ENCODE measurements at regions of chr17 and their contacts with region 1.

Region 1: DNA sequence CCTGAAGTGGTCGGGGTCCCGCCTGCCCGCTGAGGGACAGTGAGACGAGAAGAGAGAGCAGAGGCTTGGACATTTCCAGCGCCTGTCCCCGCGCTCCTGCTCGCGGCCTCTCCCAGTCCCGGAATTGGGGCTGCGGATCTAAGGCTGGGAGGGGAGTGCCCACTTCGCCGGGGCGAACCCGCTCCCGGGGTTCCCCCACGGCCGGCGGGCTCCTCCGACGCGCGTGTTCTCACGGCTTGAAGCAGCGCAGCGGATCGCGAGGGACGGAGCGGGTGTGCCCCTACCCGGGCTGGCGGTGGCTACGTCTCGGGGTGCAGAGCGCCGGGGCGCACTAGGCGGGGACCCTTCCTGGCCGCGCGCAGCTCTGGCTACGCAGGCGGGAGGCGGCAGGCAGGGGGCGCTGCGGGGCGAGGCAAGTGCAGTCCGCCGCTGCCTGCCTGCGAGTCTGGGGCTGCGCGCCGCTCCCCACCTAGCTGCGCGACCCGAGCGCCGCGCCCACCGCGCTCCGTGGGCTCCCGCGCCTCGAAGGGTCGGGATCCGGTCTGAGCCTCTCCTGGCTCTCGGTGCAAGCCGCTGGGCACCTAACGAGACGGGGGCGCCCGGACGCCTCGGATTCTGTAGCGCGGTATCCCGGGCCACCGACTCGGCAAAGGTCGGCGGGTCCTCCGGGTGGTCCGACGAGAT is 1.2 kb downstream of the NGFR start:
- DNase-seq: peak; percentile 42 to 94
- H3K4me3 ChIP-seq: peak overlapping the region; percentile 6
- CTCF ChIP-seq: no peak
- POLR2A ChIP-seq: no peak

Region 2: GRCh38 chr17:48107168-48108132 is 1388.9 kb before region 1 on chr17 and contains the start of gene SNX11:
- intact Hi-C with region 1: loop called (anchors 5 kb)
- DNase-seq: peak; percentile 84 to 98
- H3K4me3 ChIP-seq: peak within 1 kb of the TSS; percentile 59
- CTCF ChIP-seq: no peak
- POLR2A ChIP-seq: no peak
- total RNA-seq, gene SNX11: 11.1 to 15.7 (median 13.0) TPM

Region 3: GRCh38 chr17:49434821-49435670 is 61.3 kb before region 1 on chr17:
- intact Hi-C with region 1: loop called (anchors 10 kb)
- DNase-seq: peak in 1 of 2 donors; percentile 84
- H3K4me3 ChIP-seq: no peak overlapping the region
- CTCF ChIP-seq: no peak
- POLR2A ChIP-seq: no peak

Region 4: DNA sequence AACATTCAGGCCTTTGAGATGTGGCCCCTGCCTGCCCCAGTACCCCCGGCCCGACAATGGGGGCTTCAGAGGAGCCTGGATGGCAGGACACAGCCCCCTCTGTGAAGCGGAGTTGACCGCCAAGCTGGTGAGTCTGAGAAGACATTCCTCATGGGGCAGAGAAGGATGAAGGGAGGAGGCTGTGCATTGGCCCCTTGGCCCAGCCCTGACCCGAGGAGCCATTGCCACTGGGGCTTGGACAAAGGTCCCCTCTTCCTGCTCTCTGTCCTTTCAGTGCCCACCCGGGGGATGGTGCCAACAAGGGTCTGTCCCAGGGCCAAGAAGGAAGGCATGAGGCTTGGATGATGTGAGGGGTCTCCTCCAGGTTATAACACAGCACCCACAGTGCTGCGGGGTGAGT is 50.7 kb before region 1 on chr17:
- intact Hi-C with region 1: no loop called
- DNase-seq: no peak
- H3K4me3 ChIP-seq: no peak overlapping the region
- CTCF ChIP-seq: no peak
- POLR2A ChIP-seq: no peak

Region 5: GRCh38 chr17:49548506-49549310 is 52.4 kb after region 1 on chr17:
- intact Hi-C with region 1: loop called (anchors 5 kb)
- DNase-seq: peak in 1 of 2 donors; percentile 83
- H3K4me3 ChIP-seq: no peak overlapping the region
- CTCF ChIP-seq: no peak
- POLR2A ChIP-seq: no peak

Region 6: DNA sequence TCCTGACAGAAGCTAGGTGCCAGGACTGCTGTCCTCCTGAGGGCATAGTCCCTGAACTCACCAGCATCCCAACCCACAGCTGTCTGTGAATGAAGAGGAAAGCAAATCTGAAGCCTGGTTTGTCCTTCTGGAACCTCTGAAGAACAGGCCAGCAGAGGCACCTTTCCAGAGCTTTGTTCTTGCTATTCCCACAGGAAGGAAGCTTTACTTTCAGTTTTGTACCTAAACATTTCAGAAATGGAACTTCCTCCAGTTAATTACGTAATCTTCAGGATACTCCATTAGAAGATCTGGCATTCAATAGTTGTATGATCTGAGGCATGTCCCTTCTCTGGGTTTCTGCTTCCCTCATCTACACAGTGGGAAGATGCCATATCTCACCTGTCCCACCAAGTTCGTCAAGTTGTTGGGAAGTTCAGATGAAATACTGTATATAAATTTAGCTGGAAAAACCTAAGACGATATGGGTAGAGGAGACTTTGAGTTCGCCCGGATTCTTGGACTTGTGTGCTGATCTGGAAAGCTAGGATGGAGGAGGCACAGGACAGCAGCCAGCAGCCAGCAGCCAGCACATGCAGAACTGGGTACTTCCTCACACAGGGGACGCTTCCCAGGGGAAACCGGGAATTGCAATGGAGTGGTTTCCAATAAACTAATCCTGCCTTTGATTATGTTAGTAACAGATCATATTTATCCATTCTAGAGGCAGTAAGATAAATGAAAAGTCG is 101.8 kb after region 1 on chr17:
- intact Hi-C with region 1: no loop called
- DNase-seq: no peak
- H3K4me3 ChIP-seq: no peak overlapping the region
- CTCF ChIP-seq: no peak
- POLR2A ChIP-seq: no peak

Measured in lower leg skin (tissue), 4 donors.